GM13977 (cell line): ENCODE measurements at regions of chr6 and their contacts with region 1.

Region 1: GRCh38 chr6:34986845-34987246 is 97.8 kb downstream of the ANKS1A start:
- DNase-seq: peak; percentile 68
- CTCF ChIP-seq: peak; percentile 74

Region 2: DNA sequence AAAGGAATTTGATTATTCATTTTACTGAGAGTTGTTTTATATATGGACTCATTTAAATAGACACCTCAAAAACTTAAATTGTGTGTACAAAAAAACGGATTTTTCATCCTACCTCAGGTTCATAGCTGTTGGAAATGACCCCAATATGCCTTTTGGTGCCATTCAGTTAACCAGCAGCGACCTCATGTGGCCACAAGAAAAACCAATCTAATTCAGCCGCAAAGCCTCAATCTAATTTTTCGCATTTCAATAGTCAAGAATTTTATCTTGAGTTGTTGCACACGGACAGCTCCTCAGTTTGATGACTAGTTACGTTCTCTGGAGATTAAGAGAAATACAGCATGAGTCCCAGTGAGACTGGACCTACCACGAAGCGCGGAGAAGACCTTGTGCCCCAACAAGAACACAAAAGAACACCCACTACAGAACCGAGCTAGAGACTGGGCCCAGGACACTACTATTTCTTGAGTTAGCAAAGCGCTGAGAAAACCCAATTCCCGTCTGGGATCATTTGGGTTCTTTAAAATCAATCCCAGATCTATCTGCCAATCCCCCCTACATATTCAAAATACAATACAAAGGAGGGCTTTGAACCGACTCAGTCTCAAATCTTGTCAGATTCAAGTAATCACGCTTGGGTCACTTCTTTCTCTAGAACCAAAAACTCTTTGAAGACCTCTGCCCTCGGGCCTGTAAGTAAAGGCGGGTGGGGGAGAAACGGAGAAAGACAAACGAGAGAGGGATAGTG is 153.2 kb after region 1 on chr6:
- in situ Hi-C with region 1: loop called (anchors 10 kb)
- DNase-seq: peak; percentile 59
- CTCF ChIP-seq: peak; percentile 77

Region 3: DNA sequence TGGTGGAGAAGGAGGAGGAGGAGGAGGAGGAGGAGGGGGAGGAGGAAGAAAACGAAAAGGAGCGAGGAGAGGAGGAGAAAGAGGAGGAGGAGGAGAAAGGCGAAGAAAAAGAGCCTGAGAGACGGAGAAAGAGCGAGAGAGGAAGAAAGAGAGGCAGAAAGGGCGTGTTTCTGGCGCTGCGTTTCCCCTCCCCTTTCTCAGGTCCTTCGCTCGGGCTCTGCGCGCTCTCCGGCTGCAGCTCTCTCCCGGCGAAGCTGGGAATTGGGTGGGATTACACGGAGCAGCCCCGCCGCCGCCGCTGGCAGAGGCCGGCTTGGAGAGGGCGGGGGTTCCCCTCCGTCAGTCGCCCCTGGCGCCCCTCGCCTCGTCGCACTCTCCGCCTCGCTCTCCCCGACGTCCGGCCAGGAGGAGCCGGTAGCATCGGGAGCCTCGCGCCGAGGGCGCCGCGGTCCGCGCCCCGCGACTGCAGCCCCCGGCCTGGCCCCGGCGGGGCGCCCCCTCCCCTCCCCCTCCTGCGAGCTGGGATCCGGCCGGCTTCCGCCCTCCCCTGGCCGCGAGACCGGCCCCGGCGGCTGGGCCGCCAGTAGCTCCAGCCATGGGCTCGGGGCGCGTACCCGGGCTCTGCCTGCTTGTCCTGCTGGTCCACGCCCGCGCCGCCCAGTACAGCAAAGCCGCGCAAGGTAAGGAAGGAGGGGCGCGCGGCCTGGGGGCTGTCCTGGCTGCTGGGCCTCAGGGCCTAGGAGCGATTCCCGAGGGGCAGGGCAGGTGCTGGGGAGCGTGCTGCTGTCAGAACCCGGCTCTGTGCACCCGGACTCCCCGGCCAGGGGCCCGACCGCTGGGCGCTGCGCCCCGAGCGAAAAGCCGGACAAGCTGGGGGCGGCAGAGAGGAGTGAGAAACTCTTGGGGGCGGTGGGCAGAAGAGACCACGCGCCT is 227.2 kb after region 1 on chr6 and contains the start of gene SCUBE3:
- in situ Hi-C with region 1: loop called (anchors 25 kb)
- DNase-seq: peak; percentile 85
- CTCF ChIP-seq: no peak